ENCODE measurements at regions of chr19 and their contacts with region 1.

Region 1: GRCh38 chr19:34904846-34905527 is 21.7 kb upstream of the ZNF30 start:
- DNase-seq: no peak

Region 2: DNA sequence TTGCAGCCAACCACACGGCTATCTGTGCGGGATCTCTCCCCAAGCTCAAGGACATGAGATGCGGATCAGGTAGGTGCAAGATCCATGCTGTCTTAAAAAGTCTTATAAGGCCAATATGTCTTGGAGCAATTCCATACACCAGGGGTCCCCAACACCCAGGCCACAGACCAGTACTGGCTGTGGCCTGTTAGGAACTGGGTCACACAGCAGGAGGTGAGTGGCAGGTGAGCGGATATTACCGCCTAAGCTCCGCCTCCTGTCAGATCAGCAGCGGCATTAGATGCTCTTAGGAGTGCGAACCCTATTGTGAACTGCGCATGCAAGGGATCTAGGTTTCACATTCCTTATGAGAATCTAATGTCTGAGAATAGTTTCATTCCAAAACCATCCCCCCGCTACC is 63.2 kb before region 1 on chr19:
- in situ Hi-C with region 1: loop called (anchors 5 kb)
- DNase-seq: no peak

Region 3: GRCh38 chr19:34985249-34986022 is 80.4 kb after region 1 on chr19:
- in situ Hi-C with region 1: no loop called
- DNase-seq: peak; percentile 96

Measured in G401 (cell line).